ENCODE measurements at regions of chr3 and their contacts with region 1.

Region 1: DNA sequence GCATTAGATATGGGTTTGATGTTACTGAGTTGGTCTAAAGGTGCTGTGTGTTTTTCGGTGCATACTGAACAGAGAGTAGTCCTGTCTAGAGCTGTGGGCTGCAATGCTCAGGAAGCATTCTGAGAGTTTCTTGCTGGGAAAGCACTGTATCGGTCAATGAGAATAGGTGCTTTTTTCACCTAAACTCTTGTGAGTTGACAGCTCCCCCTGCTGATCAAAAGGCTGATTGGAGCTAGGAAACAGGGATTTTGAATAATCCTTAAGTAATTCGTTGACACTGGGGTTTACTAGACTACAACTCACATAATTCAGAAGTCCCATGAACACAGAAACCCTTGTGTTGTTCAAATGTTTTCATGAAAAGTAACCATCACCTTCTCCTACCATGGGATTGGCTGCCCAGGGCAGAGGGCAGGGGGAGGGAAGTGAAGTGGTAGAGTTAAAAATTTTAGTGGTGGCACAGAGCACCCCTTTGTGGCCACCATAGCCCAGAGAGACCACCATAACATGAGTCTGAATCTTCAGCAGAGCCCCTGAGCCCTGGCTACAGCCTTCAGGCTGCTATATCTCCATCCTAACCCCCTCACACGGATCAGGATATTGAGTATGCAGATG is 13.0 kb upstream of the MANF start:
- DNase-seq: peak; percentile 95
- ATAC-seq: peak; percentile 90
- H3K4me3 ChIP-seq: no peak overlapping the region
- H3K27ac ChIP-seq: no peak overlapping the region
- H3K4me1 ChIP-seq: no peaks in the 10 kb centered on the region
- H3K27me3 ChIP-seq: peaks cover 9% of the 10 kb centered on the region
- CTCF ChIP-seq: peak; percentile 89

Region 2: DNA sequence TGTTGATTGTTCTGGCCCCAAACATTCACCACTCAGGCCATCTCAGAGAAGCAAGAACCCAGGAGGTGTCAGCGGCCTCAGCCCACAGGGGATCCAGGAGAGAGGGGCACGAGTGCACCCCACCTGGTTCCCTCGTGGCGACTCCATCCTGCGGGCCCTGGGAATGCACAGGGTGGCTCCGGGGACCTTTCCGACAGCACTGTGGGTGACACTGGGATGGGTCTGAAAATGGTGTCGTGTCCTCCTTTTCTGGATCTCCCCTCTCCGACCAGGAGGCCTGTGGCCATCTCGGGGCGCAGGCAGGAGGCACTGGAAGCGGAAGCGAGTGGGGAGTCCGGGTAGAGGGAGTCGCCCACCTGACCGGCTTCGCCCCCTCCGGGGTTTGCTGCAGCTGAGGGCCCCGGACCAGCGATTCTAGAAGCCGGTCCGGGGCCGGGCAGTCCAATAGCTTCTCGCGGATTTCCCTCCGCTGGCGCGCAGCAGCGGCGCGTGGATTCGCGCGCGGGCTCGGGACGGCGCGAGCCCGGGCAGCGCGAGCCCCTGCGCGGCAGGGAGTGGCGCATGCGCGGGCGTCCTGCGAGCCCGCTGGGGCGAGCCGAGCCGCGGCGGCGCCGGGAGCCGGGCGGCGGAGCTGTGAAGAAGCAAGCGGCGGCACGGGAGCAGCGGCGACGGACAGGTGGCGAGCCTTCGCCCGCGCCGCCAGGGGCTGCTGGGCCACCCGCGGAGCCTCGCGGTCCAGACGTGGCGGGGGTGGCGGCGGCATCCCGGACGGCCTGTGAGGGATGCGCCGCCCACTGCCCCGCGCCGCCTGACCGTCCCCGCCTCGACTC is 697.5 kb before region 1 on chr3 and contains the start of gene DOCK3:
- CTCF ChIA-PET with region 1: no interaction called
- POLR2A ChIA-PET with region 1: no interaction called
- intact Hi-C with region 1: loop called (anchors 5 kb)
- DNase-seq: peak; percentile 60
- ATAC-seq: peak; percentile 71
- H3K4me3 ChIP-seq: peak within 1 kb of the TSS; percentile 48; the same call in 1 of the 2 replicates
- H3K27ac ChIP-seq: no peak within 1 kb of the TSS
- H3K4me1 ChIP-seq: peaks cover 14% of the 10 kb centered on the region
- H3K27me3 ChIP-seq: peaks cover 69% of the 10 kb centered on the region
- CTCF ChIP-seq: no peak
- total RNA-seq, gene DOCK3: under 0.01 and 0.15 TPM in 2 replicates

Region 3: DNA sequence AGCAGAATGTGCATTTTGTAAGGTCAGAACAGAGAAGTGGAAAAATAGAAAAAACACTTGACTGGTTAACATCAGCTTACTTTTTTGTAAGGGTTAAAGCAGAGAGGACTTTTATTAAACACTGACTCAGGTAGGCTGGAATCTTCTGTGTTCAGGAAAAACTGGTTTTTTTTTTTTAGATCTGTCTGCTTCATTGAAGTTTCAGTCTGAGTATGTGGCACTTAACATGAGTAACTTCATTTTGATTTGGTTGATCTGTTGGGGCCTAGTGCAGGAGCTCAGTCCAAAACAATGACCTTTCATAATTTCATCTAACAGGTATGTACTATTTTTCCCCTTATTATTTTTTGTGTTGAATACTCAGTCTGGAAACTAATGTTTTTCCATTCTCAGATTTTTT is 556.2 kb before region 1 on chr3:
- CTCF ChIA-PET with region 1: interaction called, 13 read pairs
- POLR2A ChIA-PET with region 1: no interaction called
- intact Hi-C with region 1: no loop called
- DNase-seq: peak; percentile 88
- ATAC-seq: peak; percentile 31; the same call in 1 of the 2 replicates
- H3K4me3 ChIP-seq: no peak overlapping the region
- H3K27ac ChIP-seq: 0 out of 2 replicates have a peak overlapping the region, but pooled peaks have one; percentile 2
- H3K4me1 ChIP-seq: peaks cover 17% of the 10 kb centered on the region
- H3K27me3 ChIP-seq: no peaks in the 10 kb centered on the region
- CTCF ChIP-seq: no peak

Region 4: GRCh38 chr3:51099794-51100535 is 272.1 kb before region 1 on chr3:
- CTCF ChIA-PET with region 1: interaction called, 43 read pairs
- POLR2A ChIA-PET with region 1: no interaction called
- intact Hi-C with region 1: loop called (anchors 1 kb)
- DNase-seq: peak; percentile 79
- ATAC-seq: peak; percentile 100
- H3K4me3 ChIP-seq: no peak overlapping the region
- H3K27ac ChIP-seq: no peak overlapping the region
- H3K4me1 ChIP-seq: no peaks in the 10 kb centered on the region
- H3K27me3 ChIP-seq: peaks cover 8% of the 10 kb centered on the region; the same call in 1 of the 2 replicates
- CTCF ChIP-seq: peak; percentile 90

Region 5: DNA sequence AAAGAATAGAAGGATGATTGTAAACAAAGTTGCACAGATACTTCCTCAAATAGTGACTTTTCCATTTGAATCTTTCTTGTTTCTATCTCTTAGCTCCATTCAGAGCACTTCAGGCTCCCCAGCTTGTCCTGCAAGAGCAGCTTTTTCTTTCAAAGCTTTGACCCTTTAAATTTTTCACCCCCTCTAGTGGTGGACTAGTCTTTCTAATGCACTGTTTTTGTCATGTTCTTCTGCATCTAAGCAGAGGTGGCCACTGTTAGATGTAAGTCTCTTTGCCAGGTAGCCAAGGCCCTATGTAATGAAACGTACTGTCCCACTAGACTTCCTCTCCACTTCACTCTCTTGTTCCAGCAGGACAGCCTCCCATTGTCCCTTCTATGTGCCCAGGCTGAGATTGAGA is 61.0 kb before region 1 on chr3:
- CTCF ChIA-PET with region 1: interaction called, 4 read pairs
- POLR2A ChIA-PET with region 1: no interaction called
- intact Hi-C with region 1: loop called (anchors 2 kb)
- DNase-seq: peak; percentile 50
- ATAC-seq: peak; percentile 69
- H3K4me3 ChIP-seq: no peak overlapping the region
- H3K27ac ChIP-seq: no peak overlapping the region
- H3K4me1 ChIP-seq: no peaks in the 10 kb centered on the region
- H3K27me3 ChIP-seq: peaks cover 30% of the 10 kb centered on the region
- CTCF ChIP-seq: peak; percentile 65

Region 6: GRCh38 chr3:51391075-51391567 is 19.1 kb after region 1 on chr3 and contains the start of gene RBM15B:
- CTCF ChIA-PET with region 1: no interaction called
- POLR2A ChIA-PET with region 1: no interaction called
- intact Hi-C with region 1: no loop called
- DNase-seq: peak; percentile 97
- ATAC-seq: peak; percentile 91
- H3K4me3 ChIP-seq: peak within 1 kb of the TSS; percentile 73
- H3K27ac ChIP-seq: peak within 1 kb of the TSS; percentile 38; the same call in 1 of the 2 replicates
- H3K4me1 ChIP-seq: peaks cover 48% of the 10 kb centered on the region
- H3K27me3 ChIP-seq: no peaks in the 10 kb centered on the region
- CTCF ChIP-seq: no peak; the same call in 1 of the 2 replicates
- total RNA-seq, gene RBM15B: 31.1 and 34.7 TPM in 2 replicates

Region 7: DNA sequence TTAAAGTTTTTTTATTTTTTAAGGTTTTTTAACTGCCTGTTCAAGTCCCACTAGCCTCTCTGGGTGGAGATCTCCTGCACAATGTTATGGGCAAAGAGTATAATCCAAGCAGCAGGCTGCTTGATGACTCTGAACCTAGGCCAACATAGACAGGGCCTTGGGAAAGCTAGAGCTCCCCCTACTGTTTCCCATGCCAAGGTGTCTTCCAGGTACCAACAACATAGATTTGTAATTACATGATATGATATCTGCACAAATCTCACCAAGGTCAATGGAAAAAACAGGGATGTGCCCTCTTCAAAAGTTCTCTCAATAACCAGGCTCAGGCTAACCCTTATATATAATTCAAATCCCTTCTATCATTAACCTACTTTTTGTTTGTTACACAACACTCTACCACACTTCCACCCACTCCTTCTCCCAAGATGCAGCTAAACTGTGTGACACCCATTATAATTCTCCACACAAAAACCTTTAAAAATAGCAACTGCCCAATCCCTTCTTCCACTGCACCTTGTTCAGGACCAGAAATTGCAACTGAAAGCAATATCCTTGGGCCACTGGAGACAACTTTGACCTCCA is 62.8 kb after region 1 on chr3:
- CTCF ChIA-PET with region 1: no interaction called
- POLR2A ChIA-PET with region 1: no interaction called
- intact Hi-C with region 1: no loop called
- DNase-seq: peak; percentile 64
- ATAC-seq: peak; percentile 94
- H3K4me3 ChIP-seq: no peak overlapping the region
- H3K27ac ChIP-seq: no peak overlapping the region
- H3K4me1 ChIP-seq: no peaks in the 10 kb centered on the region
- H3K27me3 ChIP-seq: no peaks in the 10 kb centered on the region
- CTCF ChIP-seq: peak; percentile 91

Measured in PC-3 (cell line).